Prostate gland (tissue), 2 donors: ENCODE measurements at regions of chr2 and their contacts with region 1.

Region 1: DNA sequence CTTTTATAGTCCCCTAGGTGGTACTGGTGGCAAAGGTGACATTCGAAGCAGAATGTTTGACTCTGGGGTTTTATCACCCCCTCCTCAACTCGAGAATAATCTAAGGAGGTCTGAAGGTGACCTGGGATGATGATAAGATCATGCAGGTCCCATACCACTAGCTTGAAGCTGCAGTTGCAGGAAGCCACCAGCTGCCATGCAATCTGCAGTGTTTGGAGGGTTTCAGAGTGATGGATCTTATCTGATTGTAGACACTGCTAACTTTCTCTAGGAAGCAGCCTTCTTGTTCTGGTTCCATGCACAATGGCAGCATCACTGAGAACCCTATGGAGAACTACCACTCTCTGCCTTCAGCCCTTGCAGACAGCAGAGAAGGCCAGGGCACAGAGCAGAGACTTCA is 59.4 kb upstream of the LRPPRC start:
- DNase-seq: no peak
- H3K4me3 ChIP-seq: no peak overlapping the region
- H3K27ac ChIP-seq: no peak overlapping the region
- H3K4me1 ChIP-seq: no peaks in the 10 kb centered on the region
- H3K27me3 ChIP-seq: no peaks in the 10 kb centered on the region
- CTCF ChIP-seq: no peak
- POLR2A ChIP-seq: no peak

Region 2: DNA sequence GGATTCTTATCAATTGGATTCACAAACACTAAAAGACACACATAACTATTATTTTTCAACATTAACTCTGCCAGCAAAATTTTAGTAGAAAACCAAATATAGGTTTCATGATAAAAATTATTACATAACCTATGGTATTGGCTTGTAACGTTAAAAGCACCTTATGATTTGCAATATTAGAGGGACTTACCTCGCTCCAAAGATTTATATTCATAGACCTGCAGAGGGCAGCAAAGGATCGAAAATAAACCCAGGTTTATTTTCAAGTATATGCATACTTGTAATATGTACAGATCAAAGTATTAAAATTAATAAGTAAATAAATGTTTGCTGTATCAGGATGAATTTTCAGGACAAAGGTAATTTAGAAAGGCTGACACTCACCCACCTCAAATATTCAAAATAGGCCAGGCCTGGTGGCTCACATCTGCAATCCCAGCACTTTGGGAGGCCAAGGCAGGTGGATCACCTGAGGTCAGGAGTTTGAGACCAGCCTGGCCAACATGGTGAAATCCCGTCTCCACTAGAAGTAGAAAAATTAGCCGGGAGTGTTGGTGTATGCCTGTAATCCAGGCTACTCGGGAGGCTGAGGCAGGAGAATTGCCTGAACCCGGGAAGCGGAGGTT is 104.7 kb before region 1 on chr2:
- intact Hi-C with region 1: no loop called
- DNase-seq: peak; percentile 12
- H3K4me3 ChIP-seq: no peak overlapping the region
- H3K27ac ChIP-seq: no peak overlapping the region
- H3K4me1 ChIP-seq: no peaks in the 10 kb centered on the region
- H3K27me3 ChIP-seq: no peaks in the 10 kb centered on the region
- CTCF ChIP-seq: peak in 3 of 4 experiments; percentile 25 to 51 (median 46)
- POLR2A ChIP-seq: no peak

Region 3: DNA sequence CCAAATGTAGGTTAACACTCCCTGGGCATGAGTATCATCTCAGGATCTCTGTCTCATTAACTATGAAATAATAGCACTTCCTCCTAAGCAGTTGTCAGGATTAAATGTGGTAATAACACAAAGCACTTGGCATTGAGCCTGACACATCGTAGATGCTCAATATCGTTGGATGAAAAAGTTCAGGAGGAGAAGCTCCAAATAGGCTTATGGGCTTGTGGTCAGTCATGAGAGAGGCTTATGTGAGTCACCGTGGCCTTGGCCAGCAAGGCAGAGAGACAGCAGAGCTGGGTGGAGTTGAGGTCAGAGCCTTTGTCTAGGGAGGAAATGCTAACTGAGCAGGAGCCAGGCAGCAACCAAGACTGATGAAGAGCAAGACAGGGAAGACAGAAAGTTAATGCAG is 45.1 kb after region 1 on chr2:
- intact Hi-C with region 1: no loop called
- DNase-seq: no peak
- H3K4me3 ChIP-seq: no peak overlapping the region
- H3K27ac ChIP-seq: no peak overlapping the region
- H3K4me1 ChIP-seq: peaks cover 2% of the 10 kb centered on the region
- H3K27me3 ChIP-seq: no peaks in the 10 kb centered on the region
- CTCF ChIP-seq: no peak
- POLR2A ChIP-seq: no peak

Region 4: DNA sequence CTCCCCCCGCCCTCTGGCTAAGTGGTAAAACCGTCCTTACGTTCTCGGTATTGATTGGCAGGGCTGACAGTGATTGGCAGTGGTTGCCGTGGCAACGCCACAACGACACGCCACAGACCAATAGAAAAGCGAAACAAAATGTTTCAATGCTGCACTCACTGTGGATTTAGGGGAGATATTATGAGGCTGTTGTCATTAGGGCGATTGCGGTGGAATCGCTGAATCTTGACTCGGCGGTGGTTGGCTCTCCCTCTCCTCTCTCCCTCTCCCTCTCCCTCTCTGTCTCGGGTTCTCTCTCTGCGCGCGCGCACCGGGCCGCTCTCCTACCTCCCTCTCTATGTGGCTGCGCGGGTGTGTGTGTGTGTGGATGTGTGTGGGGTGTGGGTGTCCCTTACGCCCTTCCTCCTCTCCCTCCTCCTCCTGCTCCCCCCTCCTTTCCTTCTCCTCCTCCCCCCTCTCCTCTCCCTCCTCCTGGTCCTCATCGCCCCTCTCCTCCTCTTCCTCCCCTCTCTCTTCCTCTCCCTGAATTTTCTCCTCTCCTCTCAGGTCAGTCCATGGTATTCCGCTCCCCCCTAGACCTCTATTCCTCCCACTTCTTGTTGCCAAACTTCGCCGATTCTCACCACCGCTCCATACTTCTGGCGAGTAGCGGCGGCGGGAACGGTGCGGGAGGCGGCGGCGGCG is 886.5 kb after region 1 on chr2 and contains the start of gene SIX3:
- intact Hi-C with region 1: loop called (anchors 5 kb)
- DNase-seq: no peak
- H3K4me3 ChIP-seq: peak within 1 kb of the TSS; percentile 10 to 12
- H3K27ac ChIP-seq: no peak within 1 kb of the TSS
- H3K4me1 ChIP-seq: peaks cover 3% of the 10 kb centered on the region
- H3K27me3 ChIP-seq: peaks cover 67% of the 10 kb centered on the region
- CTCF ChIP-seq: no peak
- POLR2A ChIP-seq: no peak
- total RNA-seq, gene SIX3: not detected